ENCODE measurements at regions of chr1 and their contacts with region 1.

Region 1: DNA sequence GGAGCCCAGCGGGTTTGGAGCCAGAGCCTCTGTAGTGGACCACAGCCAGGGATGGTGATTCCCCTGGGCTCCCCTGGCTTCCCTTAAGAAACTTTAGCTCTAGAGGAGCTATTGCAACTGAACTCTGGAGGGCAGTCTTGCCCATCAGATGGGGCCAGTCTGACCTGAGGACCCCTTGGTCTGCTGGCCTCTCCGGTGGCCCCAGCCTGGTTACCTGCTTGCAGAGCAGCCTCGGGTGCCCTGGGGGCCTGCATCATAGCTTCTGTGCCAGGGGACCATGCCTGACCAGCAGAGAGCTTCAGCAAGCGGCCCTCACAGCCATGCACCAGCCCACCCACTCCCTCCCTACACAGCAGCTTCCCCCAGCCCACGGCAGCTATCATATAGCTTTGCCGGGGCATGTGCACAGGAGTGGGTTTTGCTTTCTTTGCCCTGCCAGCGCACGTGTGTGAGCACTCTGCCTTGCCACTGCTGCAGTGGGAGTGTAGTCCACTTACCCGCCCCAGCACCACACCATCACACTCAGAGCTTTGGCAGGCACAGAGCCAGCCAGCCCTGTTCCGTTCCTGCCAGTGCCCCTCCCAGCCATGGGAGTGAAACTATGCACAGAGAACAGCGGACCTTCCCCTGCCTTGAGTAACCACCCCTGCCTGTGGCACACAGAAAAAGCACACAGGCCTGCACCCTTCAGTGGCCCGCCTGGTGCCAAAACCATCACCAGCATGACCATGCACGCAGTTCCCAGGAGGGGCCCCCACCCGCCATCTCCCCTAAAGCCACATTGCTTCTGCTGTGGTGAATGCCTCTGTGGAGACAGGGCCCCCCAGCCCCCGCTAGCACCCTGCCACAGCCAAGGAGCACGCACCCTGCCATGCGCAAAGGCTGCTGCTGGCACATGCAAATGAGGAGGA is 442.9 kb upstream of the NEGR1 start:
- DNase-seq: peak; percentile 54 to 68
- H3K4me3 ChIP-seq: no peak overlapping the region
- H3K27ac ChIP-seq: no peak overlapping the region; the same call in 1 of the 2 replicates
- H3K4me1 ChIP-seq: peaks cover 0 to 4% (median 0%) of the 10 kb centered on the region in 4 experiments; a peak in 2 of 7 replicates
- H3K27me3 ChIP-seq: no peaks in the 10 kb centered on the region
- CTCF ChIP-seq: peak; percentile 59 to 88 (median 82)
- EP300 ChIP-seq: no peak
- POLR2A ChIP-seq: no peak
- RAD21 ChIP-seq: peak; percentile 96 to 99

Region 2: GRCh38 chr1:72745413-72745812 is 20.2 kb after region 1 on chr1:
- CTCF ChIA-PET with region 1: interaction called, 10 read pairs
- POLR2A ChIA-PET with region 1: no interaction called
- DNase-seq: no peak
- H3K4me3 ChIP-seq: no peak overlapping the region
- H3K27ac ChIP-seq: no peak overlapping the region
- H3K4me1 ChIP-seq: no peaks in the 10 kb centered on the region
- H3K27me3 ChIP-seq: no peaks in the 10 kb centered on the region
- CTCF ChIP-seq: no peak
- EP300 ChIP-seq: no peak
- POLR2A ChIP-seq: no peak
- RAD21 ChIP-seq: no peak

Region 3: GRCh38 chr1:72845342-72845741 is 120.1 kb after region 1 on chr1:
- CTCF ChIA-PET with region 1: interaction called, 20 read pairs
- POLR2A ChIA-PET with region 1: no interaction called
- DNase-seq: no peak
- H3K4me3 ChIP-seq: no peak overlapping the region
- H3K27ac ChIP-seq: no peak overlapping the region
- H3K4me1 ChIP-seq: peaks cover 0 to 5% (median 2%) of the 10 kb centered on the region in 4 experiments; a peak in 3 of 7 replicates
- H3K27me3 ChIP-seq: no peaks in the 10 kb centered on the region
- CTCF ChIP-seq: peak; percentile 53 to 73 (median 64)
- EP300 ChIP-seq: no peak
- POLR2A ChIP-seq: no peak
- RAD21 ChIP-seq: peak; percentile 74 to 77

Region 4: DNA sequence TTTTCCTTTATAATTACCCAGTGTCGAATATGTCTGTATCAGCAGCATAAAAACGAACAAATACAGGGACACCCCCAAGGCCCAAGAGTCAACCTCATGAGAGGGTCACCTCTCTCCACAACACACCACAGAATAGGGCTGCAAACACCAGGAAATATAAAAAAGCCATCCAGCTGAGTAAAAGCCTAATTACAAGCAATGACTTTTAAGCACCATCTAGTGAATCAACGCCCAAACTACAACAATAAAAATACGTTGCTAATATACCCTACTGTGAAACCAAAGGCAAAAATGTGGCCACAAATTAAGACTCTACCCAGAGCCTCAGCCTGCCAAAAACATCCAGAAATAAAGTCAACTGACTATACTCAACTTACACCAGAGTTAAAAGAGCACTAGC is 375.0 kb after region 1 on chr1:
- CTCF ChIA-PET with region 1: interaction called, 18 read pairs
- POLR2A ChIA-PET with region 1: no interaction called
- DNase-seq: no peak
- H3K4me3 ChIP-seq: no peak overlapping the region
- H3K27ac ChIP-seq: no peak overlapping the region
- H3K4me1 ChIP-seq: no peaks in the 10 kb centered on the region; a peak in 1 of 7 replicates
- H3K27me3 ChIP-seq: no peaks in the 10 kb centered on the region
- CTCF ChIP-seq: peak in 2 of 3 experiments; percentile 8 to 10; a peak in 2 of 4 replicates
- EP300 ChIP-seq: no peak
- POLR2A ChIP-seq: no peak
- RAD21 ChIP-seq: peak; percentile 63

Region 5: DNA sequence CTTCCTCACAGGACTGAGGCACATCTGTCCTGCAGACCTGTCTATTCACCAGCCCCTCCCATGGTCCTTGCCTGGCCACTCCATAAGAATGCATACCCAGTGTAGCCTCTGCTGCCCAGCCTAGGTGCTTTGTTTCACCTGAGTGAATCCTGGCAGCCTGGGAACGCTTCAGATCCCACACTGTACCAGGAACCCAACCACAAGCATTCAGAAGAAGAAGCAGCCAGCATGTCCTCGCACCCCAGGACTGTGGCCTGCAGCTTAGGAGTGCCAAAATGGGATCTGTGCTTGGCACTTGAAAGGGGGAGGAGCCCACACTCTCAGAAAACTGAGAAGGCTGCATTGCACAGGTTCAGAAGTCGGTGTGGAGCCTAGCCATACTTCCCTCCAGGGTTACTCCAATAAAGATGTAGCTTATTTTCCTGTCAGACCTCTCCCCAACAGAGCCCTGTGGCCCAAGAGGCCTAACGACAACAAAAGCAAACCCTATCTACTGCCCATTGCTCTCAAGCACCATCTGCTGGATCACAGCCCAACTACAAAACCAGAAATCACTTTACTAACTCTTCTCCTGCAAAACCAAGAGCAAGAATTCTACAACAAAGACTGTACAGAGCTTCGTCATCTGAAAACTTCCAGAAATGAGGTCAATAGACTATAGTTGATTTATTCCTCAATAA is 480.2 kb after region 1 on chr1:
- CTCF ChIA-PET with region 1: interaction called, 20 read pairs
- POLR2A ChIA-PET with region 1: no interaction called
- DNase-seq: no peak
- H3K4me3 ChIP-seq: no peak overlapping the region
- H3K27ac ChIP-seq: no peak overlapping the region
- H3K4me1 ChIP-seq: no peaks in the 10 kb centered on the region
- H3K27me3 ChIP-seq: no peaks in the 10 kb centered on the region
- CTCF ChIP-seq: peak; percentile 10 to 53 (median 53)
- EP300 ChIP-seq: no peak
- POLR2A ChIP-seq: no peak
- RAD21 ChIP-seq: peak; percentile 70 to 74